ENCODE measurements at regions of chr2 and their contacts with region 1.

Region 1: DNA sequence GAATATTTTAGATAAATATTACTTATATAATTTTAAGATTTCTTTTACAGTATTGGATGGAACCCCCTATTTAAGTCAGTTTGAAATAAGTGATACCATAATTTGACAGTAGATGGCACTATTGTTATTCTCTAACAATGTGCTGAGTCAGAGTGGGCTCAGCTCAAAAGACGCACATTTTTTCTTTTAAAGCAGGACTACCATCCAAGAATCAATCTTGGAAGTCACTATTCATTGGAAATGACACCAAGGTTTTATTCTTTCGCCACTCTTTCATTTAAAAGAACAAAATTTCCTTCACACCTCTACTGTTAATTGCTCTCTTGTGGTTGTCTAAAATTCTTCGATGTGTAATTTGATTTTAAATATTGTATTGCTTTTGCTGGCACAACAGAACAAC is 32.6 kb upstream of the SPAG16 start:
- DNase-seq: peak; percentile 36
- CTCF ChIP-seq: peak; percentile 46

Region 2: GRCh38 chr2:212686285-212686895 is 565.2 kb before region 1 on chr2:
- in situ Hi-C with region 1: loop called (anchors 10 kb)
- DNase-seq: peak; percentile 72
- CTCF ChIP-seq: peak; percentile 58

Region 3: DNA sequence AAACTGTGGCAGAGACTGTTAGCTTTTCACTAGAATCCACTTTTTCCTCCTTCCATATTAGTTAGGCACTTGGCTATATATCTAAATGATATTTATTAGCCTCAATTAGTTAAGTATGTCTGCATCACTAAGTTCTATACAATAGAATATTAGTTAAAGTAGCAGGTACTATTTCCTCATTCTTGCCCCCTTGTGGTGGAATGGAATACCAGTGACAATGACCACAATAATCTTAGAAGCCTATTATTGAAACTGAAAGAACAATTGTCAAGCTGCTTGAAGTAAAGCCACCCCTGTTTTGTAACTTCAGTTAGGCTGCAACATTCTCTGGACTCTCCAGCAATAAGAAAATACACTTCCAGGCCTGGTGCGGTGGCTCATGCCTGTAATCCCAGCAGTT is 682.9 kb after region 1 on chr2:
- in situ Hi-C with region 1: loop called (anchors 25 kb)
- DNase-seq: peak; percentile 47
- CTCF ChIP-seq: peak; percentile 30